Mammary epithelial cell (primary cell): ENCODE measurements at regions of chr10 and their contacts with region 1.

Region 1: GRCh38 chr10:123994417-123995081 is 98.8 kb downstream of the CHST15 start:
- DNase-seq: peak; percentile 88
- H3K4me3 ChIP-seq: peak overlapping the region in 1 of 3 experiments; percentile 4
- H3K27ac ChIP-seq: peak overlapping the region; percentile 72
- H3K4me1 ChIP-seq: peaks cover 45% of the 10 kb centered on the region
- H3K27me3 ChIP-seq: no peaks in the 10 kb centered on the region
- CTCF ChIP-seq: peak; percentile 85 to 94

Region 2: GRCh38 chr10:122126763-122127659 is 1867.5 kb before region 1 on chr10:
- CTCF ChIA-PET with region 1: no interaction called
- dilution Hi-C with region 1: no loop called
- in situ Hi-C with region 1: no loop called
- intact Hi-C with region 1: no loop called
- DNase-seq: peak; percentile 73
- H3K4me3 ChIP-seq: no peak overlapping the region
- H3K27ac ChIP-seq: peak overlapping the region; percentile 23
- H3K4me1 ChIP-seq: peaks cover 19% of the 10 kb centered on the region
- H3K27me3 ChIP-seq: no peaks in the 10 kb centered on the region
- CTCF ChIP-seq: no peak

Region 3: GRCh38 chr10:124066781-124067714 is 72.5 kb after region 1 on chr10:
- CTCF ChIA-PET with region 1: no interaction called
- dilution Hi-C with region 1: no loop called
- in situ Hi-C with region 1: no loop called
- intact Hi-C with region 1: loop called (anchors 1 kb)
- DNase-seq: no peak
- H3K4me3 ChIP-seq: no peak overlapping the region
- H3K27ac ChIP-seq: no peak overlapping the region
- H3K4me1 ChIP-seq: peaks cover 23% of the 10 kb centered on the region
- H3K27me3 ChIP-seq: no peaks in the 10 kb centered on the region
- CTCF ChIP-seq: no peak

Region 4: GRCh38 chr10:124152916-124153826 is 158.6 kb after region 1 on chr10:
- CTCF ChIA-PET with region 1: interaction called, 5 read pairs
- dilution Hi-C with region 1: no loop called
- in situ Hi-C with region 1: no loop called
- intact Hi-C with region 1: loop called (anchors 1 kb)
- DNase-seq: peak; percentile 98
- H3K4me3 ChIP-seq: no peak overlapping the region
- H3K27ac ChIP-seq: peak overlapping the region; percentile 65
- H3K4me1 ChIP-seq: peaks cover 32% of the 10 kb centered on the region
- H3K27me3 ChIP-seq: no peaks in the 10 kb centered on the region
- CTCF ChIP-seq: no peak

Region 5: GRCh38 chr10:124217906-124218804 is 223.6 kb after region 1 on chr10:
- CTCF ChIA-PET with region 1: interaction called, 5 read pairs
- dilution Hi-C with region 1: no loop called
- in situ Hi-C with region 1: no loop called
- intact Hi-C with region 1: loop called (anchors 1 kb)
- DNase-seq: peak; percentile 64
- H3K4me3 ChIP-seq: no peak overlapping the region
- H3K27ac ChIP-seq: no peak overlapping the region
- H3K4me1 ChIP-seq: peaks cover 30% of the 10 kb centered on the region
- H3K27me3 ChIP-seq: no peaks in the 10 kb centered on the region
- CTCF ChIP-seq: peak; percentile 28 to 40

Region 6: DNA sequence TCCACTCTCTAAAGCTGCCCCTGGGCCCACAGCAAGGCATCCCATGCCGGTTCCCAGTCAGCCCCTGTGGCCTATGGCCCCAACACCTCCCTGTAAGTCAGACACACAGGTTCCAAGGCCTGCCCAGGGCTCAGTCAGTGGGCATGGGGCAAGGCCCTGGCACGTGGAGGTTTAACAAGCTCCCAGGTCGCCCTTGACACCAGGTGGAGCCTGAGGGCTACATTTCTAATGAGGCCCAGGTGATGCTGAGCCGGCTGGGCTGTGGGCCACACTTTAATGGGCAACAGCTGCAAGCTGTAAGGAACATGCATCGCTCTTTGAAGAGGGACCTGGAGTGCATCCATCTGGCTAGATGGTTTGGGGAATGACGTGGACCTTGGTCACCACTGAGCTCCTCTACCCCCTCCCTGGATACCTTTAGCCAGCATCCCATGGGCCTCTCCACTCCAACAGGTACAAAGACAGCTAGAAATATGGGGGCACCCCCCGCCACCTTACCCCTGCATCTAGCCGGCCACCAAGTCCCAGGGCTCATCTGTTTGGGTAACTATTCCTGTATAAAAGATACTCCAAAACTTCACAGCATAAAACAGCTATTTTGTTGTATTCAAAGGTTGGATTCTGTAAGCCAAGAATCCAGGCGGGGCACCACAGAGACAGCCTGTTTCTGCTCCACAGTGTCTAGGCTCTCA is 301.7 kb after region 1 on chr10:
- CTCF ChIA-PET with region 1: interaction called, 6 read pairs
- dilution Hi-C with region 1: no loop called
- in situ Hi-C with region 1: no loop called
- intact Hi-C with region 1: loop called (anchors 1 kb)
- DNase-seq: peak; percentile 13
- H3K4me3 ChIP-seq: no peak overlapping the region
- H3K27ac ChIP-seq: no peak overlapping the region
- H3K4me1 ChIP-seq: peaks cover 21% of the 10 kb centered on the region
- H3K27me3 ChIP-seq: no peaks in the 10 kb centered on the region
- CTCF ChIP-seq: peak in 1 of 2 donors; percentile 30

Region 7: DNA sequence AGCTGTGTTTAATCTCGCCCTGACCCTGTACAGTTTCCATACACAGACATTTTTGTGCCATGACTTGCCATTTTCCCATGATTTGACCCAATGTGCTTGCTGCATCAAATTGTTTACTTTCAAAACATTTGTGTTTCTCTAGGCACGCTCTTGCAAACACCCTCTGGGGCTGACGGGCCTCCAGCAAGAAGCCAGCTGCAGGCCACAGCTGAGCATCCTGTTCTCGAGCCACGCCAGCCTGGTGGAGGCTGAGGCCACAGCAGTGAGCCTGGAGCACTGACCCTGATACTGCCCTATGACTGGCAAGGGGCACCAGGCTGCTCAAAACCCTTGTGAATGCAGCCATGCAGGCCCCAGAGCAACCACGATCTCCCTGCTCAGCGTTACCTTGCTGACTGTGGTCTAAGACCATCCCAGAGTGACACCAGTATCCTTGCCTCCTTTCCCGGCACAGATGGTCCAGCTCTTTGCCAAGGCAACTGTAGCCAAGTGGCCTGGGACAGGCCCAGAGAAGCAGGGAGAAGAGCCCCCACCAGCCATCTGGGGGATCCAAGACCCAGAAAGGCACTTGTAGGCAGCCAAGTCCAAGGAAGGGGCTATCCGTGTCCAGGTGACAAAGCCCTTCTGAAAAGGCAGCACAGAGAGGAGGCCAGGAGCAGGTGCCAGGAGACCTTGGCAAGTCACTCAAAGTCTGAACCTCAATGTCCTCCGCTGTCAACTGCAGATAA is 345.6 kb after region 1 on chr10:
- CTCF ChIA-PET with region 1: no interaction called
- dilution Hi-C with region 1: no loop called
- in situ Hi-C with region 1: no loop called
- intact Hi-C with region 1: no loop called
- DNase-seq: peak; percentile 19
- H3K4me3 ChIP-seq: no peak overlapping the region
- H3K27ac ChIP-seq: no peak overlapping the region
- H3K4me1 ChIP-seq: peaks cover 26% of the 10 kb centered on the region
- H3K27me3 ChIP-seq: no peaks in the 10 kb centered on the region
- CTCF ChIP-seq: no peak

Region 8: GRCh38 chr10:124388823-124389612 is 394.5 kb after region 1 on chr10:
- CTCF ChIA-PET with region 1: interaction called, 14 read pairs
- dilution Hi-C with region 1: loop called (anchors 5 kb)
- in situ Hi-C with region 1: loop called (anchors 5 kb)
- intact Hi-C with region 1: loop called (anchors 1 kb)
- DNase-seq: peak; percentile 72
- H3K4me3 ChIP-seq: peak overlapping the region; percentile 14 to 33 (median 17)
- H3K27ac ChIP-seq: no peak overlapping the region
- H3K4me1 ChIP-seq: peaks cover 13% of the 10 kb centered on the region
- H3K27me3 ChIP-seq: no peaks in the 10 kb centered on the region
- CTCF ChIP-seq: peak; percentile 62 to 91

Region 9: GRCh38 chr10:124741281-124741921 is 746.9 kb after region 1 on chr10:
- CTCF ChIA-PET with region 1: interaction called, 3 read pairs
- dilution Hi-C with region 1: no loop called
- in situ Hi-C with region 1: no loop called
- intact Hi-C with region 1: loop called (anchors 2 kb)
- DNase-seq: peak; percentile 77
- H3K4me3 ChIP-seq: peak overlapping the region; percentile 42 to 46 (median 44)
- H3K27ac ChIP-seq: peak overlapping the region; percentile 91
- H3K4me1 ChIP-seq: peaks cover 69% of the 10 kb centered on the region
- H3K27me3 ChIP-seq: no peaks in the 10 kb centered on the region
- CTCF ChIP-seq: peak; percentile 74 to 85